Activated B cell treated with CpG ODN at 0.5 μM for 24 hours (primary cell): ENCODE measurements at regions of chr11 and their contacts with region 1.

Region 1: GRCh38 chr11:33320016-33320813 is 63.0 kb downstream of the HIPK3 start:
- DNase-seq: no peak
- ATAC-seq: no peak
- H3K4me3 Mint-ChIP-seq: no peak overlapping the region
- H3K27ac Mint-ChIP-seq: no peak overlapping the region
- H3K4me1 Mint-ChIP-seq: peaks cover 21% of the 10 kb centered on the region
- H3K27me3 Mint-ChIP-seq: no peaks in the 10 kb centered on the region
- CTCF ChIP-seq: no peak

Region 2: DNA sequence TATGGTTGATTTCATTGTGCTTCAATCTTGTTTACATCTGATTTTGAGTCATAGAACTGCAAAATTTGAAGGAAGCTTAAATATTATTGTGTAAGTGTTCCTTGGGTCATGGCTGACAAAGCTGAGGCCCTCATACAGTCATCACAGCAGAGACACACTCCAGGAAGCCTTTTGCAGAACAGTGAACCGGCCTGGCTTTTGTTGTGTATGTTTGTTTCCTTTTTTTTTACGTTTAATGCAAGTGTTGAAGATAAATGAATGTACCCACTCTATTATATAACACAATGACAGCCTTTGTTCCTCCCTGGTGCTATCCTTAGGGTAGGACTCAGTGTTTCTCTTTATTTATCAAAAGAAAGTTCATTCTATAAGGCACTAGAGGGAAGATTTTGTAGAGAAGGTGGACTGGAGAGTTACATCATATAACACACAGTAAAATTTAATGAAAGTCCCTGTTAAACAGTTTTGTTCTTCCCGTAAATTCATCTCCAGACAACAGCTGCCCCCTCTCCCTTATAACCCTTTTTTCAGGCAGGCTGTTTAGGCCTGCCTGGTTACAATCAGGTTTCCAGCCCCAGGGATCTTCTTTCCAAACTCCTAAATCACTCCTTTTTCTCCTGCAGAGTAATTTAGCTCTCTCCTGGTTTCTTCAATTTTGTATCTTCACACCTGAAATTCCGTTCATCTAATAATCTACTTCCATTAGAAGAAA is 124.6 kb before region 1 on chr11:
- CTCF ChIA-PET with region 1: no interaction called
- POLR2A ChIA-PET with region 1: no interaction called
- intact Hi-C with region 1: no loop called
- DNase-seq: no peak
- ATAC-seq: no peak
- H3K4me3 Mint-ChIP-seq: no peak overlapping the region
- H3K27ac Mint-ChIP-seq: no peak overlapping the region
- H3K4me1 Mint-ChIP-seq: no peaks in the 10 kb centered on the region
- H3K27me3 Mint-ChIP-seq: no peaks in the 10 kb centered on the region
- CTCF ChIP-seq: no peak

Region 3: DNA sequence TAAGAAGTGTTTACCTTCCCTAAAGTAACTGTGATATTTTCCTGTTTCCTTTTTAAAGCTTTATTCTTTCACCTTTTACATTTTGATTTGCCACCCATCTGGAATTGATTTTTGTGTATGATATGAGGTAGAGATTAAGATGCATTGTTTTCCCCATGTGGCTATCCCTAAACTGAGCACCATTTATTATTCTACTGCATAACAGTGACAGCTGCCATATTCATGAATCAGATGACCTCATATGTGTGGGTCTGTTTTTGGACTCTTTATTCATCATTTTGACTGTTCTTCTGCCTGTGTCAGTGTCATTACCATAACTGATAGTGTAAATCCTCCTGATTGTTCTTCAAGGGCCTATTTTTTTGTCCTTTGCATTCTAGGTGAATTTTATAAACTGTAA is 12.2 kb before region 1 on chr11:
- CTCF ChIA-PET with region 1: no interaction called
- POLR2A ChIA-PET with region 1: no interaction called
- intact Hi-C with region 1: loop called (anchors 2 kb)
- DNase-seq: no peak
- ATAC-seq: no peak
- H3K4me3 Mint-ChIP-seq: no peak overlapping the region
- H3K27ac Mint-ChIP-seq: no peak overlapping the region
- H3K4me1 Mint-ChIP-seq: peaks cover 25% of the 10 kb centered on the region
- H3K27me3 Mint-ChIP-seq: no peaks in the 10 kb centered on the region
- CTCF ChIP-seq: no peak